ENCODE measurements at regions of chr11 and their contacts with region 1.

Region 1: DNA sequence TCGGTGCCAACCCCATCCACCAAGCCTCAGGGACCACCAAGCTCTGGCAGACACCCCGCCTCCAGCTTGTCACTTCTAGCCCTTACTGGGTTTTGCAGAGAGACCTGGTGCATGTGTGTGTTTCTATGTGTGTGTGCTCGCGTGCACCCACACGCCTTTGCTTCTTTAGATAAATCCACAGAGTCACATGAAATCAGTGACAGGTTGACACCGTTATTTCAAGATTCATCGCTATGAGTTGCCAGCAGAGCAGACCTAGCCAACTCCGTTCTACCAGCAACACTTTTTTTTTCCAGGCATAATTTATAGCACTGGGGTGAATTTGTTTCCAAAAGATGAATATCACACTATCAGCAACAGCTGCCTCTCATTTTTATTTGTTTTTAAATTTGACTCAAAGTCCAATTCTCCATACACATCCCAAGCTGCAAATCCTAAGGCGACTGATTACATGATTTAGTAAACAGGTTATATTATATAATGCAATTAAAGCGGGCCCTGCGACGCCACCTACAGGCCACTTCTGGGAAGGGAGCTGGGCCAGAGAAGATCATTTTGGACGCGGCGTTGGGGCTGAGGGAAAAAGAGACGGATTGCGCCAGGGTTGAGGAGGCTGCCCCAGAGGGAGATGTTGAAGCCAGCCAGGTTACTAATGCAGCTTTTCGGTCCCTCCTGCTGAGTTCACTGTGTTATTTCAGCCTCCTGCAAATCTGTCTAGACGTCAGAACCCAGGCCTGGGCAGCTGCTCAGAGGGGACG is 150.5 kb downstream of the FEZ1 start:
- DNase-seq: peak; percentile 47
- H3K4me3 Mint-ChIP-seq: no peak overlapping the region
- H3K27ac Mint-ChIP-seq: no peak overlapping the region
- H3K4me1 Mint-ChIP-seq: no peaks in the 10 kb centered on the region
- H3K27me3 Mint-ChIP-seq: peaks cover 5% of the 10 kb centered on the region

Region 2: DNA sequence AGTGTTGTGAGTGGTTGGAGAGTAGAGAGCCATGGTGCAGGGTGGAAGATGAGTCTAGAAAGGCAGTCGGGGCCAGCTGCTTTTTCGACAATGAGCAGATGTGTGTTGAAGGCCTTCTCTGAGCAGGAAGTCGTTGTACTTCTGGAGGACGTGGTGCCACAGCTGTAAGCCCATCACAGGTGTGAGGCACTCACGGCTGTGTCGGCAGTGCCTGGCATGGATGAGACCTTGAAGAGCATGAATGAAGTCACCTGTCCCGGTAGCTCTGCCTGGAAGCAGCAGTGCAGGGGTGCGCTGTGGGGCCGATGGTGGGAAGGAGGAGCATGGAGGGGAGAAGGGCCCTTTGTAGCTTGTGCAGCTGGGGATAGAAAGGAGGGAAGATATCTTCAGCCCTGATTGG is 15.8 kb before region 1 on chr11:
- CTCF ChIA-PET with region 1: interaction called, 36 read pairs
- POLR2A ChIA-PET with region 1: no interaction called
- DNase-seq: no peak
- H3K4me3 Mint-ChIP-seq: no peak overlapping the region
- H3K27ac Mint-ChIP-seq: no peak overlapping the region
- H3K4me1 Mint-ChIP-seq: no peaks in the 10 kb centered on the region
- H3K27me3 Mint-ChIP-seq: peaks cover 34% of the 10 kb centered on the region

Region 3: GRCh38 chr11:125335106-125335505 is 10.5 kb before region 1 on chr11:
- CTCF ChIA-PET with region 1: interaction called, 36 read pairs
- POLR2A ChIA-PET with region 1: no interaction called
- DNase-seq: no peak
- H3K4me3 Mint-ChIP-seq: no peak overlapping the region
- H3K27ac Mint-ChIP-seq: no peak overlapping the region
- H3K4me1 Mint-ChIP-seq: no peaks in the 10 kb centered on the region
- H3K27me3 Mint-ChIP-seq: peaks cover 11% of the 10 kb centered on the region

Region 4: DNA sequence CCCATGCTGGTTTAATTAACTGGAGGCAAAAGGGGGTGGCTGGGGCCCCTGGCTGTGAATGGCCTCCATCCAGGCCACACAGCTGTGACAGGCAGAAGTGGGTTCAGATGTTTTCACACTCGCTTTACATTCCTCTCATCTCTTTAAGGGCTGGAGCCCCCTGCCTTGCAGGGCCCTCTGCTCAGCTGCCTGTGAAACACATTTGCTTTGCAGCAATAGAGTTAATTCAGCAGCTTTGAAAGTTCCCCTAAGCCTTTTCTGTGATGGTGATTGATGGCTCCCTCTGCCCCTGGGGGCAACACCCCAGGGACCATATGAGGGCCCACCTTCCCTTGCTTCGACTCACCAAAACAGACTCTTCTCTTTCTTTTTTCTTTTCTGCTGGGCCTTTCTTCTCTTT is 11.2 kb after region 1 on chr11:
- CTCF ChIA-PET with region 1: interaction called, 24 read pairs
- POLR2A ChIA-PET with region 1: no interaction called
- DNase-seq: no peak
- H3K4me3 Mint-ChIP-seq: no peak overlapping the region
- H3K27ac Mint-ChIP-seq: no peak overlapping the region
- H3K4me1 Mint-ChIP-seq: peaks cover 8% of the 10 kb centered on the region
- H3K27me3 Mint-ChIP-seq: peaks cover 1% of the 10 kb centered on the region

Region 5: DNA sequence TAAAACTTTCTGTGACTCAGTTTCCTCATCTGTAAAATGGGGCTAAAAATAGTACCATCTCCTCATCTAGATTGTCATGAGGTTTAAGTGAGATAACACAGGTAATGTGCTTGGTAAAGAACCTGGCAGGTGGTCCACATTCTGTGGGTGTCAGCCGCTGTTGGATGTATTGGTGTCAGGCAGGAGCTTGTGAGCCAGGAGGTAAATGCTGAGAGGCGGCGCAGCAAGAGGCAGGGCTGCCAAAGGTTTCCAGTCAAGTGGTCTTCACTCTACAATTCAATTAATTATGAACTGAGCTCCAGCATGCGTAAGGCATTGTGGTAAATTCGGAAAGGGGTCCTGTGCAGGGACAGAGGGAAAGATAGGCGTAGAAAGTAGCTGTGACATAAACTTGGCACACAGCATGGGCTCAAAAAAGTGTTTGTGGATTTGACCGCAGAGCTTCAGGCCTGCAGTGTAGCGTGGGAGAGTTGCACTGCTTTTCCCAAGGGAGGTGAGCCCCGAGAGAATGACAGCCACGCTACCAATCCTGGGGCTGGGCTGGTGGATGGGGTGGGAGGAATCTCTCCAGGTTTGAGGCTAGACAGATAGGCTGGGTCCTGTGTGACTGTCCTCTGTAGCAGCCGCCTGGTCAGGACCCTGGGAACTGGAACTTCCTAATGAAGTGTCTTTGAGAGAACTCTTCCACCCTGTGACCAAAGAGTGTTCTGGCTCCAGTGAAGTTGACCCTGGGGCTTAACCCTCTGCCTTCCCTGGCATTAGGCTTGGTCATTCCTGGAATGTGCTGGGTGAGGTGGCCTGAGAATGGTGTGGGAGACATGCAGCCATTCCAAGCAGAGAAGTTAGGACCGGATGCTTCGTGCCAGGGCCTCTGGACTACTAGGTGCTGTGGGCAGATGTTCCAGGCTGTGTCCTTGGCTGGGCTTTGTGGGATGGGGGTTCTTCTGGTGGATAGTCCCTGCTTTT is 28.1 kb after region 1 on chr11:
- CTCF ChIA-PET with region 1: interaction called, 13 read pairs
- POLR2A ChIA-PET with region 1: no interaction called
- DNase-seq: no peak
- H3K4me3 Mint-ChIP-seq: no peak overlapping the region
- H3K27ac Mint-ChIP-seq: no peak overlapping the region
- H3K4me1 Mint-ChIP-seq: no peaks in the 10 kb centered on the region
- H3K27me3 Mint-ChIP-seq: peaks cover 45% of the 10 kb centered on the region